HepG2 (cell line): ENCODE measurements at regions of chr13 and their contacts with region 1.

Region 1: GRCh38 chr13:49936085-49936940 is at the start of gene SPRYD7:
- DNase-seq: peak; percentile 95
- ATAC-seq: peak; percentile 98
- H3K4me3 ChIP-seq: peak within 1 kb of the TSS; percentile 81 to 94 (median 88)
- H3K27ac ChIP-seq: peak within 1 kb of the TSS; percentile 74
- H3K4me1 ChIP-seq: peaks cover 41% of the 10 kb centered on the region
- H3K27me3 ChIP-seq: no peaks in the 10 kb centered on the region; a peak in 1 of 5 replicates
- CTCF ChIP-seq: peak; percentile 99
- EP300 ChIP-seq: peak in 1 of 2 experiments; percentile 46; a peak in 1 of 4 replicates
- POLR2A ChIP-seq: peak; percentile 49 to 88
- RAD21 ChIP-seq: peak; percentile 81
- total RNA-seq, gene SPRYD7: 5.9 and 6.8 TPM in 2 replicates

Region 2: DNA sequence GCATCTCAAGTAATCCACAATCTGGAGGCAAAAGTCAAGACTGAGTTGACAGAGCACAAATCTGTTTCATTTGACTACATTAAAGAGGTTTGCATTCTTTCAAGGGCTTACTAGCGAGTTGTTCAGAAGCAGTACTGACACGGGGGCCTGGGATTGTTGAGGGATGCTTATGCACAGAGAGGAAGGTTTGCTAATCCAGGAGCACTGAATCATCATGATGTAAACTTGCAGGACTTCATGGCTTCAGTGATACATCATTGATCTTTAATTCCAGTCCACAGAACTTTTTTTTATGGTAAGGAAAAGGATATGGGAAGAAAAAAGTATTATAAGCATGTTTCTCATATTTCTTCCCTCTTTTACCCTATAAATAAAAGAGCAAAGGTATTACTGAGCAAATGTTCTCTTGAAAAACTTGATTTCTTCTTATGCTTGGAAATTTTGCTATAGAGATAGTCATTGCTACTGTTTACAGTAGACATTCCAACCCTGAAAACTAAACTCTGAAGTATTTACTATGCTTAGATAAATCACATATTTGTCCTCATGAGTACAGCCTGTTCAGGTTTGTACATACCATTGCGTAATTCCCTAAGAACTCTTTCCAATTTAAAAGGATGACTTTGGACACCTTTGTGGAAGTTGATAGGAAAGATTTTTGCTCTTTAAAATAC is 78.0 kb before region 1 on chr13:
- CTCF ChIA-PET with region 1: no interaction called
- POLR2A ChIA-PET with region 1: interaction called, 4 read pairs
- in situ Hi-C with region 1: no loop called
- intact Hi-C with region 1: loop called (anchors 2 kb)
- DNase-seq: peak; percentile 95
- ATAC-seq: peak; percentile 97
- H3K4me3 ChIP-seq: peak overlapping the region in 1 of 3 experiments; percentile 45; a peak in 2 of 6 replicates
- H3K27ac ChIP-seq: peak overlapping the region; percentile 81
- H3K4me1 ChIP-seq: peaks cover 41% of the 10 kb centered on the region
- H3K27me3 ChIP-seq: no peaks in the 10 kb centered on the region
- CTCF ChIP-seq: no peak
- EP300 ChIP-seq: peak; percentile 94 to 95
- POLR2A ChIP-seq: no peak
- RAD21 ChIP-seq: no peak

Region 3: GRCh38 chr13:51134763-51135365 is 1198.6 kb after region 1 on chr13:
- CTCF ChIA-PET with region 1: no interaction called
- POLR2A ChIA-PET with region 1: no interaction called
- in situ Hi-C with region 1: no loop called
- intact Hi-C with region 1: no loop called
- DNase-seq: no peak
- ATAC-seq: peak; percentile 95
- H3K4me3 ChIP-seq: no peak overlapping the region
- H3K27ac ChIP-seq: no peak overlapping the region
- H3K4me1 ChIP-seq: no peaks in the 10 kb centered on the region
- H3K27me3 ChIP-seq: peaks cover 0 to 11% of the 10 kb centered on the region in 2 experiments; a peak in 3 of 5 replicates
- CTCF ChIP-seq: no peak
- EP300 ChIP-seq: no peak
- POLR2A ChIP-seq: no peak
- RAD21 ChIP-seq: no peak